Spleen (tissue), 13 donors: ENCODE measurements at regions of chr20 and their contacts with region 1.

Region 1: DNA sequence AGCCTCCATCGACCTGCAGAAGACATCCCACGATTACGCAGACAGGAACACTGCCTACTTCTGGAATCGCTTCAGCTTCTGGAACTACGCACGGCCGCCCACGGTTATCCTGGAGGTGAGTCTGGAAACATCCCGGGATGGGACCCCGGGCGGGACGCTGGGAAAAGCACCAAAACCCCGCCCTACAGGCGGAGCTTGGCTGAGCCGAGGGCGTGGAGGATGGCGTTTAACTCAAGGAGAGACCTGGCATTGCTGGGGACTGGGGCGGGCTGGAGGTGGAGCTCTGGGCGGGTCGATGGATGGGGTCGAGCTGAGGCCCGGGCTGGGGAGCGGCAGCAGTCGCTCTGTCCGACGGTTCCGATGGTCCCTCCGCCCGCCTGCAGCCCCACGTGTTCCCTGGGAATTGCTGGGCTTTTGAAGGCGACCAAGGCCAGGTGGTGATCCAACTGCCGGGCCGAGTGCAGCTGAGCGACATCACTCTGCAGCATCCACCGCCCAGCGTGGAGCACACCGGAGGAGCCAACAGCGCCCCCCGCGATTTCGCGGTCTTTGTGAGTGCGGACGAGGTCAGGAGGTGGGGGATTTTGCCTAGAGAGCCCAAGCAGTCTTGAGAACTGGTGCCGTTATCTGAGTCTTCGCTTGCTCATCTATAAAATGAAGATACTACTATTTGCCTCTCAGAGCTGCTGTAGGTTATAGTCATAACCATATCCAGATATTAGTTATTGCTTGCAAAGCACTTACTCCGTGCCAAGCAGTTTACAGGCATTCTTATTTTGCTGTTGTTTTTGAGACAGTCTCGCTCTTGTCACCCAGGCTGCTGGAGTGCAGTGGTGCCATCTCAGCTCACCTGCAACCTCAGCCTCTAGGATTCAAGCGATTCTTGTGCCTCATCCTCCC is 3.8 kb downstream of the SPAG4 start:
- DNase-seq: peak; percentile 94
- H3K4me3 ChIP-seq: peak overlapping the region; percentile 41 to 81 (median 46)
- H3K27ac ChIP-seq: peak overlapping the region in 5 of 8 donors; percentile 21 to 96 (median 51)
- H3K4me1 ChIP-seq: peaks cover 23 to 64% (median 47%) of the 10 kb centered on the region in 6 donors
- H3K27me3 ChIP-seq: peaks cover 0 to 20% (median 0%) of the 10 kb centered on the region in 7 donors
- CTCF ChIP-seq: peak in 9 of 11 experiments; percentile 26 to 64 (median 51)
- POLR2A ChIP-seq: no peak

Region 2: DNA sequence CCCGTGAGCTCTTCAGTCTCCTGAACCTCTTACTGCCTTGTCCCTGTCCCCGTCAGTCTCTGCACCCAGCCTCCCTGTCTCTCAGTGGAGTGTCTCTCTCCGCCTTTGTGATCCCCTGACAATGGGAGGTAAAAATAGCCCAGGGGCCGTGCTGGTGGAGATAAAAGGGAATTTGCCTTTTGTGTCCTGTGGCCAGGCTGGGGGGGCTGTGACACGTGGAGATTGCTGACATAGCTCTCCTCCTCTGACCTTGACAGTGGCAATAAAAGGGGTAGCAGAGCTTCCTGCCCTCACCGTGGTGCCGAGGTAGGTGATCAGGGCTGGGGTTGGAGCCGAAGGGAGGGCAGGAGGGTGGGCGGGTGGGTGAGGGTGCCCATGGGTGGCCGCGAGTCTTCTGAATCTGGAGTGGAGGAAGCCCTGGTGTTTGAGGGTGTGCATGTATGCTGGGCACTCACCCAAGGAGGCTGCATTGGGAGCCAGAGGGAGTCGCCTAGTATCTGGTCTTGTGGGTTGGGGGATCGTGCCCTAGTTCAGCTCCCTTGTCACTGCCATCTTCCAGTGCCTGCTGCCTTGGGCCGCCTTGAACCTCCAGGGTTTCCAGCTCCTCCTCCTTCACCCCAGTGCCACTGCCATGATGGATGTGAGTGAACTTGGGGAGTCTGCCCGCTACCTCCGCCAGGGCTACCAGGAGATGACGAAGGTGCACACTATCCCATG is 641.9 kb before region 1 on chr20:
- intact Hi-C with region 1: no loop called
- DNase-seq: peak; percentile 50
- H3K4me3 ChIP-seq: no peak overlapping the region
- H3K27ac ChIP-seq: no peak overlapping the region
- H3K4me1 ChIP-seq: no peaks in the 10 kb centered on the region
- H3K27me3 ChIP-seq: peaks cover 0 to 42% (median 0%) of the 10 kb centered on the region in 7 donors
- CTCF ChIP-seq: no peak
- POLR2A ChIP-seq: no peak

Region 3: GRCh38 chr20:35166242-35166830 is 453.1 kb before region 1 on chr20:
- intact Hi-C with region 1: no loop called
- DNase-seq: peak; percentile 88
- H3K4me3 ChIP-seq: no peak overlapping the region
- H3K27ac ChIP-seq: peak overlapping the region in 5 of 8 donors; percentile 37 to 74 (median 57)
- H3K4me1 ChIP-seq: peaks cover under 1 to 38% (median 12%) of the 10 kb centered on the region in 6 donors
- H3K27me3 ChIP-seq: no peaks in the 10 kb centered on the region
- CTCF ChIP-seq: peak in 1 of 11 experiments; percentile 11
- POLR2A ChIP-seq: no peak

Region 4: GRCh38 chr20:35463455-35464300 is 155.8 kb before region 1 on chr20:
- intact Hi-C with region 1: loop called (anchors 10 kb)
- DNase-seq: no peak
- H3K4me3 ChIP-seq: no peak overlapping the region
- H3K27ac ChIP-seq: no peak overlapping the region
- H3K4me1 ChIP-seq: peaks cover 0 to 23% (median 3%) of the 10 kb centered on the region in 6 donors
- H3K27me3 ChIP-seq: no peaks in the 10 kb centered on the region
- CTCF ChIP-seq: peak; percentile 75 to 90 (median 82)
- POLR2A ChIP-seq: no peak

Region 5: GRCh38 chr20:35541783-35542588 is 77.5 kb before region 1 on chr20 and contains the start of gene ERGIC3:
- intact Hi-C with region 1: loop called (anchors 10 kb)
- DNase-seq: peak; percentile 99
- H3K4me3 ChIP-seq: peak within 1 kb of the TSS; percentile 60 to 88 (median 83)
- H3K27ac ChIP-seq: peak within 1 kb of the TSS; percentile 32 to 94 (median 88)
- H3K4me1 ChIP-seq: peaks cover 0 to 38% (median 22%) of the 10 kb centered on the region in 6 donors
- H3K27me3 ChIP-seq: no peaks in the 10 kb centered on the region
- CTCF ChIP-seq: peak in 3 of 11 experiments; percentile 20 to 47 (median 42)
- POLR2A ChIP-seq: no peak
- total RNA-seq, gene ERGIC3: 127 to 179 (median 149) TPM

Region 6: GRCh38 chr20:35664544-35665221 is 45.2 kb after region 1 on chr20 and contains the starts of genes CPNE1 and RBM12:
- intact Hi-C with region 1: loop called (anchors 5 kb)
- DNase-seq: peak; percentile 98
- H3K4me3 ChIP-seq: peak within 1 kb of the TSS; percentile 57 to 85 (median 70)
- H3K27ac ChIP-seq: peak within 1 kb of the TSS; percentile 95 to 100 (median 99)
- H3K4me1 ChIP-seq: peaks cover 31 to 51% (median 45%) of the 10 kb centered on the region in 6 donors
- H3K27me3 ChIP-seq: no peaks in the 10 kb centered on the region
- CTCF ChIP-seq: peak in 7 of 11 experiments; percentile 7 to 23 (median 18)
- POLR2A ChIP-seq: peak; percentile 34 to 73 (median 35)
- total RNA-seq, gene CPNE1: 93.9 to 247 (median 234) TPM
- total RNA-seq, gene RBM12: 44.6 to 100 (median 89.1) TPM